ENCODE measurements at regions of chr2 and their contacts with region 1.

Region 1: GRCh38 chr2:219206442-219207253 is at the start of gene ZFAND2B:
- DNase-seq: peak; percentile 93 to 95 (median 94)
- ATAC-seq: peak; percentile 97
- H3K4me3 ChIP-seq: peak within 1 kb of the TSS; percentile 61
- H3K27ac ChIP-seq: peak within 1 kb of the TSS; percentile 81
- H3K4me1 ChIP-seq: peaks cover 16 to 17% of the 10 kb centered on the region in 2 experiments; a peak in 4 of 5 replicates
- H3K27me3 ChIP-seq: no peaks in the 10 kb centered on the region
- CTCF ChIP-seq: no peak
- EP300 ChIP-seq: no peak
- POLR2A ChIP-seq: peak; percentile 90
- RAD21 ChIP-seq: no peak
- polyA plus RNA-seq, gene ZFAND2B: 9.9 to 14.6 TPM

Region 2: GRCh38 chr2:219171231-219171651 is 35.4 kb before region 1 on chr2:
- CTCF ChIA-PET with region 1: no interaction called
- POLR2A ChIA-PET with region 1: interaction called, 3 read pairs
- in situ Hi-C with region 1: loop called (anchors 5 kb)
- intact Hi-C with region 1: loop called (anchors 2 kb)
- DNase-seq: peak; percentile 41 to 59 (median 44)
- ATAC-seq: peak; percentile 82
- H3K4me3 ChIP-seq: no peak overlapping the region
- H3K27ac ChIP-seq: no peak overlapping the region; the same call in 2 of the 3 replicates
- H3K4me1 ChIP-seq: peaks cover 6% of the 10 kb centered on the region in 2 experiments; a peak in 3 of 5 replicates
- H3K27me3 ChIP-seq: no peaks in the 10 kb centered on the region
- CTCF ChIP-seq: peak; percentile 50 to 75 (median 72)
- EP300 ChIP-seq: no peak
- POLR2A ChIP-seq: no peak
- RAD21 ChIP-seq: peak; percentile 44 to 56

Region 3: DNA sequence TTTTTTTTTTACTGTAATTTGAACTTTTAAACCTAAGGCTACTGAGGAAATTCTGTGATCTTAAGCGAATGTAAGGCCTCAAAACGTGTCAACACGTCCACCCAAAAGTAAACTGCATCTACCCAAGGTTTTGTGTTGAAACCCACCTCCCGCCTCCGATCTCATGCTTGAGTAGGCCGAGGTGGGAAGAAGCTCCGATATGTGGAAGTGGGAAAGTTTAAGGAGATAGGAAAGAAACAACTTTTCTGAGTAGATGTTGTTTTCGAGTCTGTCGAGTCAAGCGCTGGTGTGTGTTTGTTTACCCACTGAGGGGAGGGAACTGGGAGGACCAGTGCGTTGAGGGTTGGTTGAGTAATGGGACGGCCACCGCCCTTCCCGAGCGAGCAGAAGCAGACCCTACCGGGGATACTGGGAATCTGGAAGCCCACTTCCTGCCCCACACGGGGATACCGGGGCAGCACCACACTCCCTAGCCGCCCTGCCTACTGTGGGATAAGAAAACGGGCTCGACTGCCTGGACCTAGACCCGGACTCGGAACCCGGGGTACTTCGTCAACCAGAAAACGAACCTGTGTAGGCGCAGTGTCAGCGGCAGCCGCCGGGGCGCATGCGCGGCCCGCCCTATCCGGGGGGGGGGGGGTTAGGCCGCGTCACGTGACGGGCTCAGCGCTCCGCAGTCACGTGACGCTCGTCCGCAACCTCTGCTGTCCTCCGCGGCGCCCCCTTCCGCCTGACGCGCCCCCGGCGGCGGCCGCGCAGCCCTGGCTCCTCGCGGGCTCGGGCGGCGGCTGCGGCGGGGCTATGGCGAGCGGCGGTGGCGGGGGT is 28.9 kb before region 1 on chr2 and contains the start of gene RETREG2:
- CTCF ChIA-PET with region 1: interaction called, 4 read pairs
- POLR2A ChIA-PET with region 1: interaction called, 4 read pairs
- in situ Hi-C with region 1: loop called (anchors 5 kb)
- intact Hi-C with region 1: loop called (anchors 2 kb)
- DNase-seq: peak; percentile 89 to 96 (median 93)
- ATAC-seq: peak; percentile 86
- H3K4me3 ChIP-seq: peak within 1 kb of the TSS; percentile 80
- H3K27ac ChIP-seq: peak within 1 kb of the TSS; percentile 97
- H3K4me1 ChIP-seq: peaks cover 9 to 25% of the 10 kb centered on the region in 2 experiments; a peak in 4 of 5 replicates
- H3K27me3 ChIP-seq: no peaks in the 10 kb centered on the region
- CTCF ChIP-seq: peak in 2 of 3 experiments; percentile 42 to 49; a peak in 2 of 6 replicates
- EP300 ChIP-seq: peak; percentile 6; the same call in 1 of the 2 replicates
- POLR2A ChIP-seq: peak; percentile 82
- RAD21 ChIP-seq: no peak
- polyA plus RNA-seq, gene RETREG2: 4.9 to 22.6 TPM

Region 4: GRCh38 chr2:219664944-219665343 is 458.3 kb after region 1 on chr2:
- CTCF ChIA-PET with region 1: no interaction called
- POLR2A ChIA-PET with region 1: no interaction called
- in situ Hi-C with region 1: no loop called
- intact Hi-C with region 1: no loop called
- DNase-seq: peak in 1 of 4 experiments; percentile 54
- ATAC-seq: 0 out of 3 replicates have a peak, but pooled peaks have one; percentile 8
- H3K4me3 ChIP-seq: no peak overlapping the region
- H3K27ac ChIP-seq: peak overlapping the region; percentile 40; the same call in 1 of the 3 replicates
- H3K4me1 ChIP-seq: peaks cover 13 to 44% of the 10 kb centered on the region in 2 experiments; a peak in 4 of 5 replicates
- H3K27me3 ChIP-seq: no peaks in the 10 kb centered on the region
- CTCF ChIP-seq: no peak
- EP300 ChIP-seq: no peak
- POLR2A ChIP-seq: no peak
- RAD21 ChIP-seq: no peak

Measured in K562 (cell line).